ENCODE measurements at regions of chr12 and their contacts with region 1.

Region 1: GRCh38 chr12:51814311-51815088 is 34.0 kb downstream of the FIGNL2 start:
- DNase-seq: peak in 8 of 10 donors; percentile 33 to 81 (median 58)
- H3K4me3 ChIP-seq: peak overlapping the region; percentile 38 to 77 (median 66)
- H3K27ac ChIP-seq: peak overlapping the region in 52 of 59 donors; percentile 15 to 91 (median 72)
- H3K27me3 ChIP-seq: no peaks in the 10 kb centered on the region
- CTCF ChIP-seq: peak in 51 of 56 donors; percentile 23 to 78 (median 56)

Region 2: GRCh38 chr12:51590347-51591019 is 224.0 kb before region 1 on chr12:
- intact Hi-C with region 1: loop called (anchors 5 kb)
- DNase-seq: peak in 9 of 10 donors; percentile 45 to 78 (median 69)
- H3K4me3 ChIP-seq: peak overlapping the region; percentile 42 to 91 (median 64)
- H3K27ac ChIP-seq: peak overlapping the region in 39 of 59 donors; percentile 8 to 87 (median 65)
- H3K27me3 ChIP-seq: no peaks in the 10 kb centered on the region
- CTCF ChIP-seq: peak in 45 of 56 donors; percentile 6 to 76 (median 55)

Region 3: DNA sequence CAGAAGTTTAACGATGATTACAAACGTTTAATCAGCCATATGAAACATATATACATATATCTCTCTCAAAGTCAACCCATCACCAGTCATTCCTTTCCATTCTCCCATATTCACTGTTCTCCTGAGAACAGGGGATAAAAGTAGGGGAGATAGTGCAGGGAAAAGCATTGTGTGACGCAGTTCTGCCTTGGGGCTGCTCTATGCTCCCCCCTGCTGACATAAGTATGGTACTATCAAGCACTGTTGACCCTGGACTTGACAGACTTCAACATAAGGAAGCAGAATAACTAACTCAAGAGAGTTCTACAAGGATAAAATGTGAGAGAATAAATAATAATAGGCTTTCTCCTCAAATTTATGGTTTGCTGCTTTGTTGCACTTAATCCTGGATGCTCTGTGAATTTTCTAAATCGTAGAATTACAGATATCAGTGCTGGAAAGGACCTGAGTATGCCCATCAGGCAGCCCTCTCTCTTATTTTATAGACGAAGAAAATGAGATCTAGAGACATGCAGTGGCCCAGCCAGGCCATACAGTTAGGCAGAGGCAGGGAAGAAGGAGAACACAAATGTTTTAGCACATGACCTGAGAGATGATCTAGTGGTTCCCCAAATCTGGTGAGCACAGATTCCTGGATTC is 136.3 kb before region 1 on chr12:
- intact Hi-C with region 1: loop called in 1 of 2 experiments (anchors 5 kb)
- DNase-seq: peak in 2 of 10 donors; percentile 28 to 31
- H3K4me3 ChIP-seq: peak overlapping the region in 12 of 59 donors; percentile 3 to 52 (median 20)
- H3K27ac ChIP-seq: peak overlapping the region in 2 of 59 donors; percentile 11 to 35
- H3K27me3 ChIP-seq: no peaks in the 10 kb centered on the region
- CTCF ChIP-seq: peak in 54 of 56 donors; percentile 16 to 75 (median 60)

Region 4: GRCh38 chr12:51771008-51771407 is 43.5 kb before region 1 on chr12:
- intact Hi-C with region 1: no loop called
- DNase-seq: no peak
- H3K4me3 ChIP-seq: no peak overlapping the region
- H3K27ac ChIP-seq: no peak overlapping the region
- H3K27me3 ChIP-seq: no peaks in the 10 kb centered on the region
- CTCF ChIP-seq: no peak

Region 5: DNA sequence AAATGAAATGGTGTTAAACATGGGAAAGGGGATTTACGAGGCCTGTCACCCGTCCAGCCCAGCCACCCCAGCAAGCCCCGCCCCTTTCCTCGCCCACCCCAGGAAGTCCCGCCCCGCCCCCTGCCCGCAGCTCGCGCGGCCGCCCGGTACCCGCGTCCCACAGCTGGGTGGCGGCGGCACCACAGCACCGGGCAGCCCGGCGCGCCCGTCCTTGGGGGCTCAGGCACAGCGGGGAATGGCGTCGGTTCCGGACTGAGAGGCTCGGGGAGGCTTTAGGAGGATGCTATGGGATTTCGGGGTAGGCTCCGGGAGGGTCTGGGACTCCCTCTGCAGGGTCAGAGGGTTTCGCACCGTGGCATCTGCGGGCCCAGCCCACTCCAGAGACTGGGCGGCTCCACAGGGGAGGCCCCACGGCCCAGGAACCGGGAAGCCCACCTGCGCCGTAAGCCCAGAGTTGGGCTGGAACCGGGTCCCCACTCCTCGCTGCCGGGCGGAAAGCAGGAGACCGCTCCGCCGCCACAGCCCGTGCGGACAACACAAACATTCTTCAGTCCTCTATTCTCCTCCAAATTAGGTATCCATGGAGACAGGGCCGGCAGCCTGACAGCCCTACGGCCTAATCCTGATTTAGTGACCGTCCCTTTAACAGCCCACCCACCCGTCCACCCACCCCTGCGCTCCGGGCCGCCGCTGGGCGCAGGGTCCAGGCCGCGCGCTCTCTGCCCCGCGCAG is 32.6 kb after region 1 on chr12:
- intact Hi-C with region 1: no loop called
- DNase-seq: peak in 2 of 10 donors; percentile 20 to 42
- H3K4me3 ChIP-seq: peak overlapping the region; percentile 41 to 80 (median 65)
- H3K27ac ChIP-seq: peak overlapping the region in 41 of 59 donors; percentile 4 to 83 (median 62)
- H3K27me3 ChIP-seq: peaks cover 0 to 64% (median 30%) of the 10 kb centered on the region in 45 donors
- CTCF ChIP-seq: no peak

Region 6: DNA sequence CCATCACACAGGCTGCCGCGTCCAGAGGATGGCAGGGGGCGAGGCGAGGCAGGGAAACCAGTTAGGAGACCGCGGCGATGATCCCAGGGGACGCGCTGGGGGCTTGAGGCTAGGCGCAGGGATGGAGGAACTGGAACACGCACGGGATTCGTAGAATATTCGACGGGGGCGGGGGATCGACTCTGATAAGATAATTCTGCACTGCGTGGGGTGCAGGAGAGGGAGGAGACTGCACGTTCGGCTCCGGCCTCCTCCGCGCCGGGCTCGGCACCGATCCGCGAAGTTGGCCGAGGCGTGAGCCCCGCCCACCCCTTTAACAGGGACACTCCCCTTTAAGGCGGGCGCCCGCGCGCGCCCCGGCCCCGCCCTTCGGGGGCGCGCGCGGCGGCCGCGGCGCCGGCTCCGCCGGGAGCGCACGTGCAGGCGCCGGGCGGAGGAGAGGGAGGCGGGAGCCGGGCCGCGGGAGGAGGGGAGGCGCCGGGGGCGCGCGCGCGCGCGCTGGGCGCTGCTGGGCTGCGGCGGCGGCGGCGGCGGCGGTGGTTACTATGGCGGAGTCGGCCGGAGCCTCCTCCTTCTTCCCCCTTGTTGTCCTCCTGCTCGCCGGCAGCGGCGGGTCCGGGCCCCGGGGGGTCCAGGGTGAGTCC is 136.8 kb after region 1 on chr12 and contains the start of gene ACVR1B:
- intact Hi-C with region 1: loop called in 1 of 2 experiments (anchors 10 kb)
- DNase-seq: peak; percentile 75 to 95 (median 90)
- H3K4me3 ChIP-seq: peak within 1 kb of the TSS; percentile 73 to 100 (median 97)
- H3K27ac ChIP-seq: peak within 1 kb of the TSS in 58 of 59 donors; percentile 22 to 96 (median 89)
- H3K27me3 ChIP-seq: no peaks in the 10 kb centered on the region
- CTCF ChIP-seq: peak in 2 of 56 donors; percentile 12 to 19
- total RNA-seq, gene ACVR1B: 29.2 to 90.8 (median 62.6) TPM

Measured in dorsolateral prefrontal cortex (tissue), 120 donors.